ENCODE measurements at regions of chr11 and their contacts with region 1.

Region 1: DNA sequence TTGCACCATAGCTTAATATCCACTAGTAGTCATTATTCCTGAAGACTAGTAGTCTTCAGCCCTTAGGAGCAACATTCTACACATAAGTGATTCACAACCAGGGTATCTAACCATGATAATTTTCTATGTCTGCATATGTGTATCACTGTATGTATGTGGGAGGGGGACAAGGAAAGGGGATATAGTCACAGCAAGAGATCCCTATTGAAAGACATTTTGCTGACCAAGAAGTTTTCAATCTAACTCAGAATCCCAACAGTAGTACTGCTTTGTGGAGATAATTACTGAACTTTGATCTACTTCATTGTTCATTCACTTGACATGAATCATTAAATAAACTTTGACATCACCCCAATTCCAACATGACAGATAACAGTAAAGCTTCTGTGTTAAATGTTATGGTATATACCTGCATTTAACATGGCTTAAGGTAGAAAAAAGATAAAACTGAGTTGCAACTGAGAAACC is 10.3 kb downstream of the PIK3C2A start:
- DNase-seq: no peak
- H3K4me3 ChIP-seq: no peak overlapping the region
- H3K27ac ChIP-seq: no peak overlapping the region
- H3K4me1 ChIP-seq: no peaks in the 10 kb centered on the region
- H3K27me3 ChIP-seq: no peaks in the 10 kb centered on the region
- CTCF ChIP-seq: no peak
- POLR2A ChIP-seq: no peak

Region 2: DNA sequence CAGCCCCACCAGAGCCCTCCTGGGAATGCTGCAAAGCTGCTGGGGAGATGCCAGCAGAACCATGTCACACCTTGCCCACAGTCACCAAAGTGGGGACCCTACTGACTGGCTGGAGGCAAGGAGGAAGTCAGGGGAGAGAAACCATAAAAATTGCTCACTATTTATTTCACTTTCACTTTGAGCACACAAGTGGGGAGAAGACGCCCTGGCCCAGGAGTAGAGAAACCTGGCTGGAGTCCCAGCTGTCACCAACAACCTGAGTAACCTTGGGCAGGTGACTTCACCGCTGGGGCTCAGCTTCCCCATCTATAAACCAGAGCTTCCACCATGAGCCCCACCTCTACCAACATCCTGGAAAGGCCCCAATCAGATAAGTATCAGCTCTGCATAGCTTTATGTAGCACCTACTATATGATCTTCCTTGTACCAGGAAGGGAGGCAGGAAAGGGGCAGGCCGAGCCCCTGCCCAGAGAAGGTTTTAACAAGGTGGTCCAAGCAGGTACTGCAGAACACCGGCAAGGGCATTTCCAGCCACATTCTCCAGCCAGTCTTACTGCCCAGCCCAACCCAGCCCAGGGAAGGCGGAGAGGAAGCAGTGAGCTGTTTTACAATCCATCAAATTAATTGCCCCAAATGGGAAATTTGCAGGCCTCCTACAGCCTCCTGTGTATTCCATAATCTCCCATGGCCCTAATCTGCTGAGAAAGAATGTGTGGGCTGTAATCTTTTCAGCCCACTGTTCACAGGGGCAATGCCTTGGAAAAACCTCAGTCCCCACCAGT is 210.8 kb before region 1 on chr11:
- intact Hi-C with region 1: no loop called
- DNase-seq: peak; percentile 74 to 83
- H3K4me3 ChIP-seq: no peak overlapping the region
- H3K27ac ChIP-seq: peak overlapping the region; percentile 91 to 96
- H3K4me1 ChIP-seq: peaks cover 0 to 36% of the 10 kb centered on the region in 2 donors
- H3K27me3 ChIP-seq: no peaks in the 10 kb centered on the region
- CTCF ChIP-seq: peak in 1 of 3 donors; percentile 42
- POLR2A ChIP-seq: no peak

Region 3: DNA sequence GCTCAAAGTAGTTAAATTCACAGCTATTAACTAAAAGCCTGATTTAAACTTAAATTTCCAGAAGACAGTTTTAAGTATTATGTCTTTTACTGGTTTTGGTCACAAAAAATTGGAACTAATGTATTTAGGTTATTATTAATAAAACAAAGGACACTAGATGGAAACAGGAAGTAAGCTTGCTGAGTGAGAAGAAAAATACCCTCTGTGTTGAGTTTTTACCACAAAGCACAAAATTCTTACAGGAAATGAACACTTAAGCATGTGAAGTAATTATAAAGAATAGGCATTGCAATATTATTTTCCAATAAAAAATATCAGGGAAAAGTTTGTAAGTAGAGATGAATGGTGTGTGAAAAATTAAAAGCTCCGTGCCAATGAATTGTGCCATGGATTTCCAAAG is 36.0 kb before region 1 on chr11:
- intact Hi-C with region 1: no loop called
- DNase-seq: no peak
- H3K4me3 ChIP-seq: no peak overlapping the region
- H3K27ac ChIP-seq: peak overlapping the region in 1 of 2 donors; percentile 35
- H3K4me1 ChIP-seq: no peaks in the 10 kb centered on the region
- H3K27me3 ChIP-seq: no peaks in the 10 kb centered on the region
- CTCF ChIP-seq: no peak
- POLR2A ChIP-seq: no peak

Region 4: GRCh38 chr11:17171916-17172315 is 25.5 kb before region 1 on chr11:
- intact Hi-C with region 1: loop called (anchors 2 kb)
- DNase-seq: no peak
- H3K4me3 ChIP-seq: no peak overlapping the region
- H3K27ac ChIP-seq: no peak overlapping the region
- H3K4me1 ChIP-seq: no peaks in the 10 kb centered on the region
- H3K27me3 ChIP-seq: no peaks in the 10 kb centered on the region
- CTCF ChIP-seq: no peak
- POLR2A ChIP-seq: no peak

Measured in breast epithelium (tissue), 4 donors.